Sigmoid colon (tissue), 7 donors: ENCODE measurements at regions of chr12 and their contacts with region 1.

Region 1: GRCh38 chr12:63802012-63802608 is 22.4 kb downstream of the RXYLT1 start:
- DNase-seq: no peak
- H3K4me3 ChIP-seq: no peak overlapping the region
- H3K27ac ChIP-seq: no peak overlapping the region
- H3K4me1 ChIP-seq: no peaks in the 10 kb centered on the region
- H3K27me3 ChIP-seq: no peaks in the 10 kb centered on the region
- CTCF ChIP-seq: peak in 3 of 4 experiments; percentile 32 to 64 (median 49)
- EP300 ChIP-seq: no peak
- POLR2A ChIP-seq: no peak

Region 2: GRCh38 chr12:63103494-63104131 is 698.5 kb before region 1 on chr12:
- intact Hi-C with region 1: loop called (anchors 10 kb)
- DNase-seq: no peak
- H3K4me3 ChIP-seq: no peak overlapping the region
- H3K27ac ChIP-seq: no peak overlapping the region
- H3K4me1 ChIP-seq: no peaks in the 10 kb centered on the region
- H3K27me3 ChIP-seq: no peaks in the 10 kb centered on the region
- CTCF ChIP-seq: peak in 2 of 4 experiments; percentile 28 to 53
- EP300 ChIP-seq: no peak
- POLR2A ChIP-seq: no peak

Region 3: DNA sequence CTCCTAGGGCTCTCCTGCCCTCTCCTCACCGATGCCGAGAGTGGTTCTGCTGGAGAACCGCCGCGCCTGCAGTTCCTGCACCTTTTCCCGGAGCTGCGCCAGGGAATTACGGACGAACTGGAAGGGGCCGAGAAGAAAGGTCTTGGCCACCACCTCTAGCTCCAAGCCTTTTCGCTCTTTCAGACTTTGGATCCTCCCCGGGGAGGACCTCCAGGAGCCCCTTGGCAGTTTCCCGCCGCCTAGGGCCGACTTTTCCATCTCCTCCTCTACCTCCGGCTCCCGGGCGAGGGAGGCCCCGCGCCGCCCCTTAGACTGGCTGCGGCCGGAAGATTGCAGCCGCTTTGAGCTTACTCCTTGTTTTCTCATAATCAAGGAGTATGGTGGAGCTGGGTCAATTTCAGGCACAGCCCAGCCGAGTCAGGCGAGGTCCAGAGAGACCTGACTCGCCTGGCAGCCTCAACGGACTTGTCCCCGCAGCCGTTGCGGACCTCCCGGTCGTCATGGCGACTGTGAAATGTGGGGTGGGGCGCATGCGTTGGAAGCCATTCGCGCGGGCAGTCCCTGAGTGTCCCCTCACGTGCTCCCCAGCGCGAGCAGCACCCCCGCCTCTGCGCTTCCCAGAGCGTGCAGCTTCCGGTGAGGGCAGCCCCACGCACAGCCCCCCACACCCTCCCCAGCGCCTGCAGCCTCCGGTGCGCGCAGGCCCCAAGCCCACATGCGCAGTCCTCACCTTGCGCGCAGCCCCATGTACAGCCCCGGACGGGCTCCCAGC is 133.9 kb before region 1 on chr12 and contains the start of gene DPY19L2:
- intact Hi-C with region 1: loop called (anchors 5 kb)
- DNase-seq: peak; percentile 88
- H3K4me3 ChIP-seq: peak within 1 kb of the TSS; percentile 42 to 71 (median 58)
- H3K27ac ChIP-seq: peak within 1 kb of the TSS; percentile 78 to 87 (median 82)
- H3K4me1 ChIP-seq: peaks cover 0 to 7% (median 2%) of the 10 kb centered on the region in 4 donors
- H3K27me3 ChIP-seq: no peaks in the 10 kb centered on the region
- CTCF ChIP-seq: no peak
- EP300 ChIP-seq: no peak
- POLR2A ChIP-seq: no peak
- total RNA-seq, gene DPY19L2: 11.1 to 28.8 (median 20.1) TPM